ENCODE measurements at regions of chr18 and their contacts with region 1.

Region 1: GRCh38 chr18:35842536-35842935 is 129.9 kb upstream of the RMP24 start:
- DNase-seq: no peak
- H3K4me3 ChIP-seq: no peak overlapping the region
- H3K4me3 Mint-ChIP-seq: no peak overlapping the region
- H3K27ac Mint-ChIP-seq: no peak overlapping the region
- H3K4me1 ChIP-seq: no peaks in the 10 kb centered on the region
- H3K4me1 Mint-ChIP-seq: no peaks in the 10 kb centered on the region
- H3K27me3 ChIP-seq: no peaks in the 10 kb centered on the region
- H3K27me3 Mint-ChIP-seq: peaks cover 23% of the 10 kb centered on the region
- CTCF ChIP-seq: no peak

Region 2: GRCh38 chr18:35875566-35875965 is 33.0 kb after region 1 on chr18:
- CTCF ChIA-PET with region 1: interaction called, 12 read pairs
- POLR2A ChIA-PET with region 1: no interaction called
- intact Hi-C with region 1: no loop called
- DNase-seq: no peak
- H3K4me3 ChIP-seq: no peak overlapping the region
- H3K4me3 Mint-ChIP-seq: no peak overlapping the region
- H3K27ac Mint-ChIP-seq: no peak overlapping the region
- H3K4me1 ChIP-seq: no peaks in the 10 kb centered on the region
- H3K4me1 Mint-ChIP-seq: no peaks in the 10 kb centered on the region
- H3K27me3 ChIP-seq: no peaks in the 10 kb centered on the region
- H3K27me3 Mint-ChIP-seq: no peaks in the 10 kb centered on the region
- CTCF ChIP-seq: no peak

Region 3: GRCh38 chr18:35964319-35964718 is 121.8 kb after region 1 on chr18:
- CTCF ChIA-PET with region 1: no interaction called
- POLR2A ChIA-PET with region 1: no interaction called
- intact Hi-C with region 1: no loop called
- DNase-seq: no peak
- H3K4me3 ChIP-seq: no peak overlapping the region
- H3K4me3 Mint-ChIP-seq: no peak overlapping the region
- H3K27ac Mint-ChIP-seq: no peak overlapping the region
- H3K4me1 ChIP-seq: no peaks in the 10 kb centered on the region
- H3K4me1 Mint-ChIP-seq: no peaks in the 10 kb centered on the region
- H3K27me3 ChIP-seq: no peaks in the 10 kb centered on the region
- H3K27me3 Mint-ChIP-seq: peaks cover 3% of the 10 kb centered on the region
- CTCF ChIP-seq: no peak